Naive thymus-derived CD4-positive, alpha-beta T cell (primary cell): ENCODE measurements at regions of chr3 and their contacts with region 1.

Region 1: DNA sequence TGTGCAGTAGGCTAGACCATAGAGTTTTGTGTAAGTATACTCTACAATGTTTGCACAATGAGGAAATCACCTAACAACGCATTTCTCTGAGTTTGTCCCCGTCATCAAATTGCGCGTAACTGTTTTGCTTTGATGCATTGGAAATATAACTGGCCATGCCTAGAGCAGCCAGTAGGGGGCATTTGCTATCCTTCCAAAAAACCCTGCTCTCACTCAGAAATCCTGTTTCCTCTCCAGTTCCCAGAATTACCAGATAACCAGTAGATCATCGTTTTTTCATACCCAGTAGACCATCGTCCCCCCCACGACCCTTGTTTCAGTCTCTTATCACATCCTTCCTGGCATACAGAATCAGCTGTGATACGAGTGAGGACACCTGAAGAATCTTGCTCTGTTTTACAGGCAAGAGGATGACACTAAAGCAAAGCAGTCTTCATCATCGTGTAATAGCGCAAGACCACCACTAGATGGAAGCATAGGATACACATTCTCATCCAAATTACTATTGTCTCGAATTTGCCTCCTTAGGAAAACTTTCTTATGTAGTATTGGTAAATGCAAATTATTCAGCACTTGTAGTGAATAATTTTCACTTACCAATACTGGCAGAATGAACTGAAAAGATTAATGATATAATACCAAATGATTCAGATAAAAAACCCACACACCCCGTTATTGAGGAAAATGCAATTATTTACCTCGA is 4.4 kb upstream of the GABRR3 start:
- DNase-seq: peak; percentile 51 to 91 (median 89)
- ATAC-seq: peak; percentile 98
- H3K4me3 ChIP-seq: peak overlapping the region; percentile 59
- H3K4me3 Mint-ChIP-seq: peak overlapping the region; percentile 11 to 95 (median 85)
- H3K27ac ChIP-seq: peak overlapping the region; percentile 75
- H3K27ac Mint-ChIP-seq: peak overlapping the region; percentile 57 to 99 (median 94)
- H3K4me1 ChIP-seq: no peaks in the 10 kb centered on the region
- H3K4me1 Mint-ChIP-seq: peaks cover 0 to 22% (median 0%) of the 10 kb centered on the region in 7 donors
- H3K27me3 ChIP-seq: peaks cover 0 to 3% of the 10 kb centered on the region in 2 donors
- H3K27me3 Mint-ChIP-seq: peaks cover 0 to 43% (median 17%) of the 10 kb centered on the region in 5 donors

Region 2: GRCh38 chr3:97764407-97765238 is 274.9 kb before region 1 on chr3 and contains the start of gene ARL6:
- CTCF ChIA-PET with region 1: no interaction called
- POLR2A ChIA-PET with region 1: interaction called, 3 read pairs
- intact Hi-C with region 1: loop called (anchors 1 kb)
- DNase-seq: peak; percentile 53 to 78 (median 73)
- ATAC-seq: peak; percentile 95
- H3K4me3 ChIP-seq: peak within 1 kb of the TSS; percentile 98
- H3K4me3 Mint-ChIP-seq: peak within 1 kb of the TSS; percentile 91 to 99 (median 98)
- H3K27ac ChIP-seq: peak within 1 kb of the TSS; percentile 78
- H3K27ac Mint-ChIP-seq: peak within 1 kb of the TSS; percentile 90 to 97 (median 93)
- H3K4me1 ChIP-seq: peaks cover 5 to 15% of the 10 kb centered on the region in 2 donors
- H3K4me1 Mint-ChIP-seq: peaks cover 9 to 36% (median 27%) of the 10 kb centered on the region in 7 donors
- H3K27me3 ChIP-seq: no peaks in the 10 kb centered on the region
- H3K27me3 Mint-ChIP-seq: peaks cover 0 to 4% (median 0%) of the 10 kb centered on the region in 5 donors
- total RNA-seq, gene ARL6: 3.0 to 7.5 (median 5.8) TPM

Region 3: DNA sequence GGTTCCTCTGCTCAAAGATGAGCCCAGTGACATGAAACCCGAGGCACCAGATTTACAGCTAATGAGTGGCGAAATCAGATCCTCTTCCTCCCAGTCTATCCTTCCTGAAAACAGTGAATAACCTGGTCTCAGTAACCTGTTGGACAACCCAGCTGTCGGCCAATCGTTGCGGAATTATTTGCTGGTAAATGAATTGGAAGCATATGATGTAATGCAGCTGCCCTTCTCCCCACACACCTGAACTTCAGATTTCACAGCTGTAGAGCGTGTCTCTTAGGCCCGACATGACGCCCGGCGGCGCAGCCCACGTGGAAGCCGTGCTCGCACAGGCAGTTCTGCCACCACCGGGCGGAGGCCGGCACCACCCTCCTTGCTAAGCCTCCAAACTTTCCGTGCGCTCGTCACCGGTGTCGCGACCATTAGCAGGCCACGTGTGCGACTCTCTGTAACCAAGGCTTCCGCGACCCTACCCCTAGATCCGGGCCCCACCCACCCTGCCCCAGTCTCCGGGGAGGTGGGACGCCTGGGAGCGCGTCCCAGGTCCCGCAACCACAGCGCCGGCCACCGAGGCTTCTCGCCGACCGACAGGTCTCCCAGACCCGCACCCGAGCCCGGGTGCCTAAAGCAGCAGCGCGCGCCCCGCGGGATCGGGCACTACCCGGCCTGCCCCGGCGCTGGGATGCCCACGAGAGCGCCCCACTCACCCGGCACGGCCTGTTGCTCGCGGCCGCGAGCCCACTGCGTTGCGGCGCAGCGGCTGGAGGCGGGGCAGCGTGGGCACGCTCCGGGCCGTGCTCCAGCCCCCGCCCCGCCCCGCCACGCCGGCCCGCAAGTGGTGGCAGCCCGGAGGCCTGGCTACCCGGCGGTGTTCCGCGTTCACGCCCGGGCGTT is 67.6 kb before region 1 on chr3 and contains the start of gene RIOX2:
- CTCF ChIA-PET with region 1: no interaction called
- POLR2A ChIA-PET with region 1: no interaction called
- intact Hi-C with region 1: loop called (anchors 1 kb)
- DNase-seq: peak; percentile 62 to 82 (median 77)
- ATAC-seq: peak; percentile 94
- H3K4me3 ChIP-seq: peak within 1 kb of the TSS; percentile 57
- H3K4me3 Mint-ChIP-seq: peak within 1 kb of the TSS; percentile 78 to 97 (median 93)
- H3K27ac ChIP-seq: peak within 1 kb of the TSS; percentile 74
- H3K27ac Mint-ChIP-seq: peak within 1 kb of the TSS; percentile 84 to 96 (median 90)
- H3K4me1 ChIP-seq: peaks cover 9 to 24% of the 10 kb centered on the region in 2 donors
- H3K4me1 Mint-ChIP-seq: peaks cover 42 to 85% (median 70%) of the 10 kb centered on the region in 7 donors
- H3K27me3 ChIP-seq: no peaks in the 10 kb centered on the region
- H3K27me3 Mint-ChIP-seq: no peaks in the 10 kb centered on the region
- total RNA-seq, gene RIOX2: 17.8 to 110 (median 28.4) TPM

Region 4: DNA sequence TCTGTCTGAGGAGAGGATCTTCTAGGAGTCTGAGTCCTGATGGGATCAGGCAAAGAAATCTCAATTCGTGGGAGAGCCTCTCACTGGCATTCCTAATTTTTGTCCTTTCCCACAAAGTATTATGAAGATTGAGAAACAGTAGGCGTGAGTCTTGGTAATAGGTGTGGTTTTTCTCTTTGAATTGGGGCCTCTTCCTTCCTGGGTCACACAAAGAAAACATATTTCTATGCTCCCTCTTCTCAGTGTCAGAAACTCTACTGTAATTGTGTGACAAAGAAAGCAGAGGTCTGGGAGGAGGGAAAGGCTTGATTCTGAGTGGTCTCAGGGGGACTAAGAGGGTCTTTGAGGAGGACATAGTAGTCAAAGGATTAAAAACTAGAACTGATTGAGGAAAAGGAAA is 10.4 kb before region 1 on chr3:
- CTCF ChIA-PET with region 1: interaction called, 9 read pairs
- POLR2A ChIA-PET with region 1: no interaction called
- intact Hi-C with region 1: loop called in 1 of 2 experiments (anchors 1 kb)
- DNase-seq: peak in 5 of 9 donors; percentile 23 to 28 (median 25)
- ATAC-seq: peak; percentile 54
- H3K4me3 ChIP-seq: peak overlapping the region; percentile 17
- H3K4me3 Mint-ChIP-seq: peak overlapping the region; percentile 49 to 89 (median 77)
- H3K27ac ChIP-seq: peak overlapping the region; percentile 68
- H3K27ac Mint-ChIP-seq: peak overlapping the region; percentile 74 to 98 (median 95)
- H3K4me1 ChIP-seq: peaks cover 0 to 15% of the 10 kb centered on the region in 2 donors
- H3K4me1 Mint-ChIP-seq: peaks cover 12 to 28% (median 22%) of the 10 kb centered on the region in 7 donors
- H3K27me3 ChIP-seq: no peaks in the 10 kb centered on the region
- H3K27me3 Mint-ChIP-seq: peaks cover 0 to 5% (median 0%) of the 10 kb centered on the region in 5 donors

Region 5: GRCh38 chr3:98522244-98523090 is 483.0 kb after region 1 on chr3 and contains the start of gene CLDND1:
- CTCF ChIA-PET with region 1: no interaction called
- POLR2A ChIA-PET with region 1: no interaction called
- intact Hi-C with region 1: loop called (anchors 1 kb)
- DNase-seq: peak; percentile 88 to 94 (median 93)
- ATAC-seq: peak; percentile 99
- H3K4me3 ChIP-seq: peak within 1 kb of the TSS; percentile 68
- H3K4me3 Mint-ChIP-seq: peak within 1 kb of the TSS; percentile 83 to 99 (median 92)
- H3K27ac ChIP-seq: peak within 1 kb of the TSS; percentile 90
- H3K27ac Mint-ChIP-seq: peak within 1 kb of the TSS; percentile 67 to 99 (median 96)
- H3K4me1 ChIP-seq: peaks cover 16 to 27% of the 10 kb centered on the region in 2 donors
- H3K4me1 Mint-ChIP-seq: peaks cover 31 to 62% (median 53%) of the 10 kb centered on the region in 7 donors
- H3K27me3 ChIP-seq: no peaks in the 10 kb centered on the region
- H3K27me3 Mint-ChIP-seq: no peaks in the 10 kb centered on the region
- total RNA-seq, gene CLDND1: 100 to 478 (median 132) TPM

Region 6: DNA sequence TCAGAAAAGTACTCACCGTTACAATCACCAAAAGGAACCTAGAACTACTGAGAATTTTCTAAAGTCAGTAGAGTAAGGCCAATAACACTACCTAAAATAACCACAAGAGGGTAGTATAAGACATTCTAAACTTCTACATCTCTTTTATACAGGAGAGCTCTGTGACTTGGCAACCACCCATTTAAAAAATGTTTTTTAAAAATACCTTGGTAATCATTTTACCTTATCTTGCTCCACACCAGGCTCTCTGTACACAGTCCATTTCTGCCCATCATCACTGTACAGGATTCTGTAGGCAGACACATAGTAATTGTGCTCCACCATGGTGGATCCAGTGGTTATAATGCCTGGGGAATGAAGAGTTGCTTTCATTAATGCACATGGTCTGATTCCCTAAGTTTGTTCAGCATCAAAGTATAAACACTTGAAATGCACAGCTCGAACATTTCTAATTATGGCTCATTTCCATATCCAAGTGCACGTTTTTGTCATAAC is 778.1 kb after region 1 on chr3:
- CTCF ChIA-PET with region 1: interaction called, 3 read pairs
- POLR2A ChIA-PET with region 1: no interaction called
- intact Hi-C with region 1: loop called (anchors 1 kb)
- DNase-seq: peak in 6 of 9 donors; percentile 12 to 54 (median 40)
- ATAC-seq: peak; percentile 83
- H3K4me3 ChIP-seq: no peak overlapping the region
- H3K4me3 Mint-ChIP-seq: no peak overlapping the region
- H3K27ac ChIP-seq: no peak overlapping the region
- H3K27ac Mint-ChIP-seq: no peak overlapping the region
- H3K4me1 ChIP-seq: no peaks in the 10 kb centered on the region
- H3K4me1 Mint-ChIP-seq: peaks cover 0 to 6% (median 1%) of the 10 kb centered on the region in 7 donors
- H3K27me3 ChIP-seq: no peaks in the 10 kb centered on the region
- H3K27me3 Mint-ChIP-seq: no peaks in the 10 kb centered on the region

Region 7: GRCh38 chr3:99753268-99753975 is 1713.9 kb after region 1 on chr3:
- CTCF ChIA-PET with region 1: no interaction called
- POLR2A ChIA-PET with region 1: no interaction called
- intact Hi-C with region 1: loop called in 1 of 2 experiments (anchors 1 kb)
- DNase-seq: peak in 6 of 9 donors; percentile 13 to 27 (median 22)
- ATAC-seq: peak; percentile 66
- H3K4me3 ChIP-seq: no peak overlapping the region
- H3K4me3 Mint-ChIP-seq: no peak overlapping the region
- H3K27ac ChIP-seq: no peak overlapping the region
- H3K27ac Mint-ChIP-seq: no peak overlapping the region
- H3K4me1 ChIP-seq: no peaks in the 10 kb centered on the region
- H3K4me1 Mint-ChIP-seq: no peaks in the 10 kb centered on the region
- H3K27me3 ChIP-seq: no peaks in the 10 kb centered on the region
- H3K27me3 Mint-ChIP-seq: peaks cover 0 to 37% (median 14%) of the 10 kb centered on the region in 5 donors